AG04449 (cell line): ENCODE measurements at regions of chr10 and their contacts with region 1.

Region 1: DNA sequence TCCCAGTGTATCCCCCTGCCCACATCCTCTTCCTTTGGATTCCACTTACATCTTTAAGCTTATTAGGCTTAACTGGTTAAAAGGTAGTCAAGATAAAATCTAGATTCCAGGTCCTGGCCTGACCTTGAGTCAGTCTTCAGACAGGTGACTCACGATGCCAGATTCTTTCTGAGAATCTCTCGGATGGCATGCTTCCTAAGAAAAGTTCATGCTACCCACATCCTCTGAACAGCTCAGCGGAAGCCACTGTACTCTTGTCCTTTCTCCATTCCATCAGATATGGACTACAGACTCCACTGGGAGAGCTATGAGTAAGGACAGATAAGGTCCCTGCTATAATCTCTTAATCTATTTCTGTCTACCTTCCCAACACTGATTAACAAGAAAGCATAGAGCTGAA is 43.4 kb downstream of the DNMBP start:
- DNase-seq: peak; percentile 74
- H3K4me3 ChIP-seq: no peak overlapping the region
- CTCF ChIP-seq: no peak

Region 2: DNA sequence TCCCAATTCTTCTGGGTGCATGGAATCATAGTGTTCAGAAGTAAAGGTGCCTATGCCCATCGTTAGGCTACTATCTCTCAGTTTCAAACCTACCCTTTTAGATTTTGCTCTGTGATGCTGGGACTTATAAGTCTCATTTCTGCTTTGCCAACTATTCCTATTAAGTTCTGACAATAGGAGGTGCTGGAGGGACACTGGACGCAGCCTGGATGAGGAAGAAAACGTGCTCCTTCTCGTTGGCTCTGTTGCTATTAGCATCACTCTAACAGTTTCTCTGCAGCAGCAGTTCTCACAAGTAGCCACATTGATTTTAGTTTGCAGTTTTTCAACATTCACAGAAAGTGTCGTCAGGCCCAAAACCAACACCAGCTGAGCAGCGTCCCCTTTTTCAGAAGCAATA is 111.4 kb before region 1 on chr10:
- CTCF ChIA-PET with region 1: interaction called, 62 read pairs
- POLR2A ChIA-PET with region 1: no interaction called
- DNase-seq: peak; percentile 36
- H3K4me3 ChIP-seq: no peak overlapping the region
- CTCF ChIP-seq: peak; percentile 69

Region 3: GRCh38 chr10:99976886-99977665 is 10.8 kb after region 1 on chr10:
- CTCF ChIA-PET with region 1: interaction called, 32 read pairs
- POLR2A ChIA-PET with region 1: interaction called, 23 read pairs
- DNase-seq: peak; percentile 92
- H3K4me3 ChIP-seq: peak overlapping the region; percentile 25
- CTCF ChIP-seq: no peak

Region 4: DNA sequence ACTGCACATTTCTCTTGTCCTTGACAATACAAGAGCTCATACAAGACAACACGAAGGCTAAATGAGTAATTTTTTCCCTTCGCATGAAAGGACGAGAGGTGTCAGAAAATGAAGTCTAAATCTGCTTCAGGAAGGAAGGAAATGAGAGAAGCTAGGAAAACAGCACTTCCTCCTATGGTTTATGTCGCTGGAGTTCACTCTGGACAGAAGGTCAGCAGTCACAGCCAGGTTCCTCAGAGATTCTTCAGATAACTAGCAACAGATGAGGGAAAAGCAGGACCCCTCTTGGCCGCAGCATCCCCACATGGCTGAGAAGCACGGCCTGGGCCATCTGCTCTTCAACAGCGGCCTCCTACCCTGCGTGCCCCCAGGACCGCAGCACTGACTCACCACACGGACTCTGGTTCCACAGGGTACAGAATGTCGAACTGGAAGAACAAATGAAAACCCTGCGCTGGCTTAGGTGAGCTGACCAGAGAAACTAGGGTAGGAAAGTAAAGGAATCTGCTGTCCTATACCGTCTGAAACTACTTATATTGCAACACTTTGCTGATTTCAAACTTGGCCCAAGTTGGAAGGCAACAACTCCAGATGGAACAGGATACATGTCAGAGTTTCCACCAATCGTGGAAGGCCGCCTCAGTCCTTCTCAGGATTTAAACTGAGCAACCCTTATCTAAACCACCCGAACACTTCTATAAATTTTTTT is 17.1 kb after region 1 on chr10:
- CTCF ChIA-PET with region 1: interaction called, 10 read pairs
- POLR2A ChIA-PET with region 1: interaction called, 6 read pairs
- DNase-seq: no peak
- H3K4me3 ChIP-seq: peak overlapping the region; percentile 37
- CTCF ChIP-seq: no peak

Region 5: DNA sequence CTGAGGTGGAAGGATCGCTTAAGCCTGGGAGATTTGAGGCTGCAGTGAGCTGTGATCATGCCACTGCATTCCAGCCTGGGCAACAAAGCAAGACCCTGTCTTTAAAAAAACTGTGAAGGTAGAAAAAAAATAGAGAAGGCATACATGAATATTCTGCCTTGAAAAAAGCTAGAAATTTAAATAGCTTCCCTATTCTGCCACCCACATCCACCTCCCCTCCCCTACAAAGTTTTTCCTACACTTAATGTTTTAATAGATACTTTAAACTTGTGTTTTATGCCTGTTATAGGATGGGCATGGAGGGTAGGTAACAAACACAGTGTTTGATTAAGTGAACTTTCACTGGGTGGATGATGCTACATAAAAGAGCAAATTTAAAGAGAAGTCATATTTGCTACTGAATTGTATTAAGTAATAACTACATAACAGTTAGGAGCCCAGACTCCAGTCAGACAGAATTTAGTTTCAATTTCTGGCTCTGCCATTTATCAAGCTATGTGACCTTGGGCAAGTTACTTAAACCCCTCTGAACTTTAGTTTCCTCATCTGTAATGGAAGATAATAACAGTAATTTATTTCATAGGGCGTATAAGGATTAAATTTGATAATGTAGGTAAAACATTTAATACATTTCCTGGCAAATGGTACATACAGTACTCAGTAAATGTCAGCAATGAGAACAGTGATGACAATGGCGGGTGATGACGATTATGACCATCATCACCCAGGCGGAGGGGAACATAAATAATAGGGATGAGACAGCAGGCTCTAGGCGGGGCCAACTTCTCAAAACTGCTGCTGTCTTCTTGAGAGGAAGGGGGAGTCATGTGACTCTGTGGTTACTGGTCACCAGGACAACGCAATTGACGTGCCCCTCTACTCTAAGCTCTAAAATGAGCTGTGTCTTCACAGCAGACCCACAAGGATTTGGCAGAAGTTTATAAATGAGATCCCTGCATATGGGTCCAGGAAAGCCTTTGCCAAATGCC is 27.7 kb after region 1 on chr10:
- CTCF ChIA-PET with region 1: interaction called, 10 read pairs
- POLR2A ChIA-PET with region 1: no interaction called
- DNase-seq: peak; percentile 54
- H3K4me3 ChIP-seq: no peak overlapping the region
- CTCF ChIP-seq: no peak